Motor neuron (in vitro differentiated cells): ENCODE measurements at regions of chr1 and their contacts with region 1.

Region 1: GRCh38 chr1:15152318-15153183 is 996 bp upstream of the TMEM51 start:
- ATAC-seq: peak; percentile 42 to 66 (median 54)
- H3K4me3 ChIP-seq: peak overlapping the region; percentile 49 to 86 (median 58)
- H3K27ac ChIP-seq: no peak overlapping the region
- H3K4me1 ChIP-seq: peaks cover 3 to 5% of the 10 kb centered on the region in 2 donors

Region 2: GRCh38 chr1:14826172-14826636 is 326.3 kb before region 1 on chr1:
- in situ Hi-C with region 1: no loop called
- ATAC-seq: peak; percentile 88 to 96 (median 94)
- H3K4me3 ChIP-seq: no peak overlapping the region
- H3K27ac ChIP-seq: peak overlapping the region in 1 of 2 donors; percentile 16
- H3K4me1 ChIP-seq: peaks cover 7% of the 10 kb centered on the region in 2 donors

Region 3: GRCh38 chr1:15243275-15244043 is 90.9 kb after region 1 on chr1:
- in situ Hi-C with region 1: no loop called
- ATAC-seq: peak in 1 of 8 experiments; percentile 71
- H3K4me3 ChIP-seq: no peak overlapping the region
- H3K27ac ChIP-seq: no peak overlapping the region
- H3K4me1 ChIP-seq: no peaks in the 10 kb centered on the region

Region 4: GRCh38 chr1:15272009-15272788 is 119.6 kb after region 1 on chr1:
- in situ Hi-C with region 1: loop called in 4 of 9 experiments (anchors 10 to 25 kb)
- ATAC-seq: peak; percentile 94 to 99 (median 99)
- H3K4me3 ChIP-seq: no peak overlapping the region
- H3K27ac ChIP-seq: no peak overlapping the region
- H3K4me1 ChIP-seq: peaks cover 5 to 6% of the 10 kb centered on the region in 2 donors

Region 5: DNA sequence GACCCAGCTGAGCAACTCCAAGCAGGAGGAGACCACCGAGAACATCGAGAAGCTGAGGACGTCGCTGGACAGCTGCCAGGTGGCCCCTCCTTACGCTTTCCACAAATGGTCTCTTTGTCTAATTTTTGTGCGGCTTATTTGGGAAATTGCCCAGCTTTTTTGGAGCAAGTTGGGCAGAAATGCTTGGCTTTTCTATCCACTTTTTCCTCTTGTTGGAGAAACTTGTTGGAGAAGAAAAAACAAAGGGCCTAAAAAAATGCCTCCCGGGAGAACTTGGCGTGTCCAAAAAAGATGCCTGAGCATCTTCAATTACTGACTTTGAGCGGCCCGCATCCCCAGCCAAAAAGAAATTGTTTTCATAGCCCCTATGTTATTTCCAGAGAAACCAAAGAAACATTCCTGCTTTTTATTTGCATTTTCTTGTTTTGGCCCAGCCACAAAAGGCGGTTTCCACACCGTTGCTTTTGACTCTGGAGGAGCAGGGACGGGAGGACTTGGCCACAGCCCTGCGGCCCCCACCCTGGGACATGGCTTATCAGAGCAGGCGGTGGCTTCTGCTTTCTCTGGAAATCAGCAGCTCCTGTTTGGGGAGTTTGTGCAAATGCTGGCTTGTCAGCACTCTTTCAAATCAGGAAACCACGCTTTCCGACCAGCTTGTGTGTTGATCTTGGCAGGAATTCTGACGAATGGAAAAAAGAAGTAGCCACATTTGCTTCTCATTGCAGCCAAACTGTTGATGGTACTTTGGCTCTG is 176.0 kb after region 1 on chr1:
- in situ Hi-C with region 1: no loop called
- ATAC-seq: peak in 4 of 8 experiments; percentile 57 to 74 (median 60)
- H3K4me3 ChIP-seq: no peak overlapping the region
- H3K27ac ChIP-seq: no peak overlapping the region
- H3K4me1 ChIP-seq: peaks cover 27 to 50% of the 10 kb centered on the region in 2 donors

Region 6: DNA sequence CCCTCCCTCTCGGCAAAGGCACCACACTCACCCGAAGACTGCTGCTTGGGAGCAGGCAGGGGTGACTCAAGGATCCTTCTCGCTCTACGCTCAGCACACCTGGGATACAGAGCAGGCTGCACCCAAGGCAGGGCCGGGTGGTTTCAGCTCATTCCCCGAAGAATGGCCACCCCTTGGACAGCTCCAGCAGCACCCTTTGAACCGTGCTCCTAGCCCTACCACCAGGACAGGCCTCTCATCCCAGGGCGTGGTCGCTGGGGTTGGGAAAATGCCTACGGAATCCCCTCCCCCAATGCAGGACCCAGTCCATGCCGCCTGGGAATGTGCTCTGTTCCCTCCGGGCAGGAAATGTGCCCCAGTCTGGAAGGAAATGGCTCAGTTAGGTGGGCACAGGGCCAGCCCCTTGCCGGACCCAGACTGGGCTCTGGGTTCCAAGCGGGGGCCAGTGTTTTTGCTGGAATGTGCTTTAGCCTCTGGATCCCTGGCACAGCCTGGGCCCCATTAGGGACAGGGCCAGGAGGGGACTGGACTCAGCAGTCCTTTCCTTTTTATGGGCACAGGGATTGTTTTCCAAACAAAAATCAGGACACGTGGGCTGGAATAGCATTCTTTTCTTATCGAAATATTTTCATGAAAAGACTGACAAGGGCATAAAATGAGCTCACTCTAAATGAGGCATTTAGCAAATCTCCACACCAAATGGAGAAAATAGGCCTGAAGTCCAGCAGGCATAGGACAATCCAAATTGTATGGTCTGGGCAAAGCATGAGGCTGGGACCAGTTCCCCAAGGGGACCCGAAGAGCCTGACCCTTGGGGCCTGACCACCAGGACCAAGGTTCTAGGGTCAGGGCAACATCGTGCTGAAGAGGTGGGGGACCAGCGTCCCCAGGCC is 597.1 kb after region 1 on chr1:
- in situ Hi-C with region 1: no loop called
- ATAC-seq: peak in 2 of 8 experiments; percentile 3 to 7
- H3K4me3 ChIP-seq: no peak overlapping the region
- H3K27ac ChIP-seq: no peak overlapping the region
- H3K4me1 ChIP-seq: peaks cover 0 to 7% of the 10 kb centered on the region in 2 donors